Activated CD4-positive, alpha-beta memory T cell treated with anti-CD3 and anti-CD28 coated beads for 36 hours (primary cell): ENCODE measurements at regions of chr12 and their contacts with region 1.

Region 1: DNA sequence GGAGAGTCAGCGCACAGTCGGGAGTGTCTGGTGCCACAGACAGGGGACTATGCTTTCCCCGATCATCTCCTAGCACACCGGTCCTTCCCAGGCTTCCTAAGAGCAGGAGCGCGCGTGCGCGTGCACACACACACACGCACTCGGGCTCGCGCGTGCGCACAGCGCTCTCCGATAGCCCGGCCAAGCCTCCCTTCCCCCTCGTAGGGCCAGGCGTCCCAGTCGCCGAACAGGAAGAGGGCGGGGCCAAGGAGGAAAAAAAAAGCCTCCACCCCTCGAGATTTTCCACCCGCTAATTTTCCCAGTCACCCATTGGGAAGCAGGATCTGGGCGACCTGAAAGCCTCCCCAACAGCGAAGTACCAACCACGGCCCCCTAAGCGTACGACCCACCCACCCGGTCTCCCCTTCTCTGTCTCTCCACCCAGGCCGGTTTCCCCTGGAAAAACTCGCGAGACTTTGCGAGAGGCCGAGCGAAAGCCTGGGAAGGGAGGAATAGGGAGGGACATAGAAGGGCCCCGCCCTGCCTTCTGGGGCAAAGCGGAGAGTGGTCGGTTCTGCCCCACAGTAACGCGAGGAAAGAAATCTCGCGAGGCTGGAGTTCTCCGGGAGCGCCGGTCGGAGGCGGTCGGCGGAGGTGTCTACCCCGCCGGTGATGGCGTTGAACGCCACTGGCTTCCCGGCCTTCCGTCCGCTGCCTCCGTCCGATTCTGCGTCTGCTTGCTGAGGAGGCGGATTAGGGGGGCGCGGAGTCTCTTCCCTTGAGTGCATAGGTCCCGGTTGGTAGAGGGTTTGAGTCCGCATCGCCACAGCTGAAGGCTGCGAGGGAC is at the starts of genes FGFR1OP2 and INTS13:
- DNase-seq: peak; percentile 98
- H3K4me3 Mint-ChIP-seq: peak within 1 kb of the TSS; percentile 94
- H3K27ac Mint-ChIP-seq: peak within 1 kb of the TSS; percentile 98
- H3K4me1 Mint-ChIP-seq: peaks cover 48% of the 10 kb centered on the region
- H3K27me3 Mint-ChIP-seq: no peaks in the 10 kb centered on the region
- total RNA-seq, gene FGFR1OP2: 49.1 to 50.7 TPM
- total RNA-seq, gene INTS13: 54.5 to 54.8 TPM

Region 2: GRCh38 chr12:26853303-26854030 is 84.6 kb before region 1 on chr12:
- CTCF ChIA-PET with region 1: no interaction called
- POLR2A ChIA-PET with region 1: no interaction called
- intact Hi-C with region 1: loop called (anchors 5 kb)
- DNase-seq: peak; percentile 82
- H3K4me3 Mint-ChIP-seq: no peak overlapping the region
- H3K27ac Mint-ChIP-seq: no peak overlapping the region
- H3K4me1 Mint-ChIP-seq: no peaks in the 10 kb centered on the region
- H3K27me3 Mint-ChIP-seq: peaks cover 4% of the 10 kb centered on the region

Region 3: GRCh38 chr12:26971963-26972362 is 33.9 kb after region 1 on chr12:
- CTCF ChIA-PET with region 1: interaction called, 5 read pairs
- POLR2A ChIA-PET with region 1: no interaction called
- intact Hi-C with region 1: loop called (anchors 1 kb)
- DNase-seq: peak; percentile 85
- H3K4me3 Mint-ChIP-seq: no peak overlapping the region
- H3K27ac Mint-ChIP-seq: no peak overlapping the region
- H3K4me1 Mint-ChIP-seq: peaks cover 24% of the 10 kb centered on the region
- H3K27me3 Mint-ChIP-seq: no peaks in the 10 kb centered on the region

Region 4: DNA sequence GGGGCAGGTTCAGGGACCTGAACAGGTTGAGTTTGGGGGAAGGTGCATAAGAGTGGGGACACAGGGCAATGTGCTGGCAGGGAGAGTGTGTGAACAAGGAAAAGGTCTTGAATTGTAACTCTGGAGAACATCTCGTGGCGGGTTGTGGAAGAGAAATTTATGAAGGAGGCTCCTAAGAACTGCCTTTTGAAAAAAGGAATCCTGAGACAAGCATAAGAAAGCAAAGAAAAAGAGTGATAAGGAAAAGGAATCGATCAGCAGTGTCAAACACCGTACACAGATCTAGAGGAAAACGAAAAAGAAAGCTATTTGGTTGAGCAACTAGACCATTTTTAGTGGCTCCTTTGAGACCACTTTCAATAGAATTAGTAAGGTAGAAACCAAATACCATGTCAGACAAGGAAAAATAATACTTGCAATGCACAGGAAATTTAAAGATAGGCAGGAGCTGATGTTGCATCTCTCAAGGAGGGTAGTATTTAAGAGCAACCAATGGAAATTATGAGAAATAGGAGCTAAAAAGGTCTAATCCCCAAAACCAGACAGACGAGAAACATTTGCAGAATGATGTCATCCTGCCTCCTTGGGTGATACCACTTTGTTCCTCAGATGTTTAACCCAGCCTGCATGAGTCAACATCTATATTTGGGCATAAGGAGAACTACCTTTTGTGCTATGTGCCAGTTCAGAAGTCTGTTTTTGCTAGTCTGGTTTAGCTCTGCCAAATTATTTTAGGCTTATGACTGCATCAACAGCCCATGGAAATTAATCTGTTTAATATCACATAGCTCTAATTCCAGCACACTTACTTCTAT is 241.5 kb after region 1 on chr12:
- CTCF ChIA-PET with region 1: no interaction called
- POLR2A ChIA-PET with region 1: no interaction called
- intact Hi-C with region 1: loop called (anchors 2 kb)
- DNase-seq: peak; percentile 47
- H3K4me3 Mint-ChIP-seq: peak overlapping the region; percentile 40
- H3K27ac Mint-ChIP-seq: peak overlapping the region; percentile 71
- H3K4me1 Mint-ChIP-seq: peaks cover 42% of the 10 kb centered on the region
- H3K27me3 Mint-ChIP-seq: no peaks in the 10 kb centered on the region

Region 5: GRCh38 chr12:27779920-27780611 is 842.0 kb after region 1 on chr12 and contains the starts of genes KLHL42 and MANSC4:
- CTCF ChIA-PET with region 1: no interaction called
- POLR2A ChIA-PET with region 1: no interaction called
- intact Hi-C with region 1: loop called (anchors 10 kb)
- DNase-seq: peak; percentile 73
- H3K4me3 Mint-ChIP-seq: peak within 1 kb of the TSS; percentile 78
- H3K27ac Mint-ChIP-seq: peak within 1 kb of the TSS; percentile 65
- H3K4me1 Mint-ChIP-seq: peaks cover 30% of the 10 kb centered on the region
- H3K27me3 Mint-ChIP-seq: no peaks in the 10 kb centered on the region
- total RNA-seq, gene KLHL42: 8.2 to 9.1 TPM
- total RNA-seq, gene MANSC4: not detected